ENCODE measurements at regions of chr5 and their contacts with region 1.

Region 1: DNA sequence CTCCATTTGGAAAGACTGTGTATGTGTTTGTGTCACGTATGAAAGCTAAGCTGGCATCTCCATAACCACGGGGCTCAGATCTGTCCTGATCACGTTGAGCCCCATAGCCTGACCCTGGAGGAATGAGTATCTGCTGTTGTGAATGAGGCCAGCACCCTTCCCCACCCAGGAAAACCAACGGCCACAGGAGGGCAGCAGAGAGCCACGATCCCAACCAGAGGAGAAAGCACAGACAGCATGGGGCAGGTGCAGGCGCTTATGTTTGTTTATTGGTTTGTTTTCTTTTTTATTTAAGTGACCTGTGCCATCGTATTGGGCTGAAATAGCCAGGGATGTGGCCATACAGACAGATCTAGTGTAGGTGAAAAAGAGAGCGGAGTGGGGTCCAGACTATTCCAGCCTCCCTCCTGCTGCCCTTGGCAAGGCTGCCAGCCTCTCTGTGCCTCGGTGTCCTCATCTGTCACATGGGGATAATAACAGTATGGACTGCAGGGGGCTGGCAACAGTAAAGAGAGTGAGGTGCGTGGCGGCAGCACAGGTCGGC is 12.0 kb downstream of the OR2V2 start:
- DNase-seq: peak; percentile 66
- H3K4me3 ChIP-seq: no peak overlapping the region
- H3K27ac ChIP-seq: no peak overlapping the region
- H3K4me1 ChIP-seq: peaks cover 13% of the 10 kb centered on the region
- H3K27me3 ChIP-seq: no peaks in the 10 kb centered on the region
- CTCF ChIP-seq: peak; percentile 89 to 91

Region 2: GRCh38 chr5:180784497-180785097 is 374.8 kb before region 1 on chr5:
- CTCF ChIA-PET with region 1: no interaction called
- dilution Hi-C with region 1: no loop called
- in situ Hi-C with region 1: loop called in 1 of 2 experiments (anchors 10 kb)
- intact Hi-C with region 1: loop called (anchors 1 kb)
- DNase-seq: peak; percentile 57
- H3K4me3 ChIP-seq: no peak overlapping the region
- H3K27ac ChIP-seq: no peak overlapping the region
- H3K4me1 ChIP-seq: peaks cover 21% of the 10 kb centered on the region
- H3K27me3 ChIP-seq: no peaks in the 10 kb centered on the region
- CTCF ChIP-seq: peak; percentile 86 to 91

Region 3: GRCh38 chr5:181052672-181053487 is 106.5 kb before region 1 on chr5:
- CTCF ChIA-PET with region 1: no interaction called
- dilution Hi-C with region 1: no loop called
- in situ Hi-C with region 1: no loop called
- intact Hi-C with region 1: loop called (anchors 10 kb)
- DNase-seq: no peak
- H3K4me3 ChIP-seq: peak overlapping the region in 2 of 3 experiments; percentile 40 to 51
- H3K27ac ChIP-seq: no peak overlapping the region
- H3K4me1 ChIP-seq: peaks cover 9% of the 10 kb centered on the region
- H3K27me3 ChIP-seq: peaks cover 27% of the 10 kb centered on the region
- CTCF ChIP-seq: no peak

Region 4: GRCh38 chr5:181088289-181088688 is 71.1 kb before region 1 on chr5:
- CTCF ChIA-PET with region 1: no interaction called
- dilution Hi-C with region 1: no loop called
- in situ Hi-C with region 1: no loop called
- intact Hi-C with region 1: no loop called
- DNase-seq: no peak
- H3K4me3 ChIP-seq: no peak overlapping the region
- H3K27ac ChIP-seq: no peak overlapping the region
- H3K4me1 ChIP-seq: no peaks in the 10 kb centered on the region
- H3K27me3 ChIP-seq: no peaks in the 10 kb centered on the region
- CTCF ChIP-seq: peak; percentile 37 to 46

Region 5: DNA sequence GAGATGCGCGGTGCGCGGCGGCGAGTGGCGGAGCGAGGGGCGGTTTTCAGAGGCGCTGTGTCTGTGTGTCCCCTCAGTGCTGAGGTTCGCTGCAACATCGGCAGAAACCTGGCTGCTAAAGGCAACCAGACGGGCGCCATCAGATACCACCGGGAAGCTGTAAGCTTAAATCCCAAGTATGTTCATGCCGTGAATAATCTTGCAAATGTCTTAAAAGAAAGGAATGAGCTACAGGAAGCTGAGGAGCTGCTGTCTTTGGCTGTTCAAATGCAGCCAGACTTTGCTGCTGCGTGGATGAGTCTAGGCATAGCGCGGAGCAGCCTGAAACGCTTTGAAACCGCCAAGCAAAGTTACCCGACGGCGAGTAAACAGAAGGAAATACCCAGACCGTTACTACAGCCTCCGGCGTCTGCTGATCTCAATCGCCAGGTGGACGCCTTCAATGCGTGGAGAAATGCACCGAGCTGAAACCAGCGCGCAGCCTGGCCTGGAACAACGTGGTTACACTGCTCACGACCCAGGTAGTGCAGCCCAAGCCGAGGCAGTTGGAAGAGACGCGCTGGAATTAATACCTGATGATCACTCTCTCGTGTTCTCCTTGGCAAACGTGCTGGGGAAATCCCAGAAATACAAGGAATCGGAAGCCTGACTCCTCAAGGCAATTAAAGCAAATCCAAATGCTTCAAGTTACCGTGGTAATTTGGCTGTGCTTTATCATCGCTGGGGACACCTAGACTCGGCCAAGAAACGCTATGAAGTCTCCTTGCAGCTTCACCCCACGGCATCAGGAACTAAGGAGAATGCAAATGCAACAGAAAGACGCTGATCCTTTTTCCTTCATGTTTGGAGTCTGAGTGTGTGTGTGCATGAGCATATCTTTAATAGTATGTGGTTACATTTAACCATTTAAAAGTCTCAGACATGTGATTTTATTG is 44.2 kb before region 1 on chr5:
- CTCF ChIA-PET with region 1: no interaction called
- dilution Hi-C with region 1: no loop called
- in situ Hi-C with region 1: loop called in 1 of 2 experiments (anchors 5 kb)
- intact Hi-C with region 1: no loop called
- DNase-seq: peak; percentile 68
- H3K4me3 ChIP-seq: peak overlapping the region in 2 of 3 experiments; percentile 31 to 39
- H3K27ac ChIP-seq: no peak overlapping the region
- H3K4me1 ChIP-seq: peaks cover 19% of the 10 kb centered on the region
- H3K27me3 ChIP-seq: no peaks in the 10 kb centered on the region
- CTCF ChIP-seq: no peak

Region 6: DNA sequence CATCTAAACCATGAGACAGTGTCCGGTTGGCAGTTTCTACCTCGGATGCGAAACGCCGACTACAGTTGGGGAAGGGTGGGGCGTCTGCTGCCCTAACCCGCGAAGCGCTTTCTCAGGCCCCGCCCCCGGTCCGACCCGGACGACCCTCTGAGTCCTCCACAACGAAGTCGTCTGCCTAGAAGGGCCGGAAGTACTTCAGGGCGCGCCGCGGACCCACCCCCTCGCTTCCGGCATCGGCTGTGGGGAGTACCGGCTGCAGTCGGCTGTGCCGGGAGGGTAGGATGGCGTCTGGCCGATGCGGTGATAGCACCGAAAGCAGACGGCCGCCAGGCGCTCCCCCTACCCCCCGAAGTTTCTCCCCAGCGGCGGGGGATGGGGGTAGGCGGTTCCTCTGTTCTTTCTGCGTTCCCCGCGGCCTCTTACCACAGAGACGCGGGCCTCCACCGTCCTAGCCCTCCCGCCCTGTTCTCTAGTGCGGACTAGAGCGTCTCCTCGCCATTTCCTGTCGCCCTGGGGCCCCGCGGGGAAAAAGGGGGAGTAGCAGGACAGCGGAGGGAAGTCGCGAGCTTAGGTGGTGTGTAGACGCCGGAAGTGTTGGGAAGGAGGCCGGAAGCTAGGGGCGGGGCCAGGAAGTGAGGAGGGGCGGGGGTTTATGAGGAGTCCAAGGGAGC is 63.8 kb after region 1 on chr5 and contains the start of gene TRIM41:
- CTCF ChIA-PET with region 1: no interaction called
- dilution Hi-C with region 1: no loop called
- in situ Hi-C with region 1: no loop called
- intact Hi-C with region 1: loop called (anchors 1 kb)
- DNase-seq: peak; percentile 97
- H3K4me3 ChIP-seq: peak within 1 kb of the TSS; percentile 86 to 99 (median 98)
- H3K27ac ChIP-seq: peak within 1 kb of the TSS; percentile 70
- H3K4me1 ChIP-seq: peaks cover 10% of the 10 kb centered on the region
- H3K27me3 ChIP-seq: no peaks in the 10 kb centered on the region
- CTCF ChIP-seq: peak in 1 of 2 donors; percentile 20
- total RNA-seq, gene TRIM41: 10.3 to 30.6 TPM